ENCODE measurements at regions of chr3 and their contacts with region 1.

Region 1: GRCh38 chr3:194315088-194315964 is 35.8 kb downstream of the CPN2 start:
- DNase-seq: peak; percentile 92 to 95
- H3K4me3 ChIP-seq: peak overlapping the region; percentile 51
- H3K4me3 Mint-ChIP-seq: peak overlapping the region; percentile 85
- H3K27ac Mint-ChIP-seq: peak overlapping the region; percentile 93
- H3K4me1 ChIP-seq: peaks cover 41% of the 10 kb centered on the region
- H3K4me1 Mint-ChIP-seq: peaks cover 49% of the 10 kb centered on the region
- H3K27me3 ChIP-seq: no peaks in the 10 kb centered on the region
- H3K27me3 Mint-ChIP-seq: no peaks in the 10 kb centered on the region
- CTCF ChIP-seq: peak; percentile 87 to 95

Region 2: DNA sequence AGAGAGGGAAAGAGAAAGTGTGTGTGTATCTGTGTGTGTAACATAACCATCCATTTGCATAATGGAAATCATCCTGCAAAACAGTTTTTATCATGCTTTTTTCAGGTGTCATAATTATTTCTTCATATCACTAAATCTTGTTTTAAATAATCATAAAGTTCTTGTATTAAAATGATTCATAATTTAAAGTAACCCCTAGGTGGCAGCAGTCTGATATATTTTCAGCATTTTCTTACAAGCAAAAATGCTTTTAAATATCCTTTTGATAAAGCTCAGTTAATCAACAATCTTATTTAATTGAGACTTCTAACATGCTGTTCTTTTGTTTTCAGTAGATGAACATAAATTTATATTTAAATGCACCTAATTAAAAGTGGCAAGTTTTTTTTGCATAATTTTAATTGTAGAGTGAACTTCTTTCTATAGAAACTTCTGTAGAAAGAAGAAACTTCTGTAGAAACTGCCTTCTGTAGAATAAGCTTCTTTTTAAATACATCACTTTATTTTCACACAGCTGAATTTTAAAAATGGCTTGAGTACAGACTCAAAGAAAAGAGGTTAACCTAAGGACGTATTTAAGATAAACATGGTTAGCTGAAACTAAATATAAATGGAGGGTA is 649.8 kb before region 1 on chr3:
- CTCF ChIA-PET with region 1: interaction called, 11 read pairs
- POLR2A ChIA-PET with region 1: no interaction called
- intact Hi-C with region 1: loop called (anchors 1 kb)
- DNase-seq: peak in 1 of 2 experiments; percentile 6
- H3K4me3 ChIP-seq: no peak overlapping the region
- H3K4me3 Mint-ChIP-seq: no peak overlapping the region
- H3K27ac Mint-ChIP-seq: no peak overlapping the region
- H3K4me1 ChIP-seq: no peaks in the 10 kb centered on the region
- H3K4me1 Mint-ChIP-seq: no peaks in the 10 kb centered on the region
- H3K27me3 ChIP-seq: no peaks in the 10 kb centered on the region
- H3K27me3 Mint-ChIP-seq: no peaks in the 10 kb centered on the region
- CTCF ChIP-seq: peak in 1 of 2 experiments; percentile 53

Region 3: GRCh38 chr3:194166682-194167479 is 148.4 kb before region 1 on chr3:
- CTCF ChIA-PET with region 1: interaction called, 10 read pairs
- POLR2A ChIA-PET with region 1: no interaction called
- intact Hi-C with region 1: loop called (anchors 1 kb)
- DNase-seq: no peak
- H3K4me3 ChIP-seq: no peak overlapping the region
- H3K4me3 Mint-ChIP-seq: peak overlapping the region; percentile 44
- H3K27ac Mint-ChIP-seq: no peak overlapping the region
- H3K4me1 ChIP-seq: peaks cover 12% of the 10 kb centered on the region; the same call in 1 of the 2 replicates
- H3K4me1 Mint-ChIP-seq: peaks cover 15% of the 10 kb centered on the region
- H3K27me3 ChIP-seq: no peaks in the 10 kb centered on the region
- H3K27me3 Mint-ChIP-seq: no peaks in the 10 kb centered on the region
- CTCF ChIP-seq: no peak

Region 4: GRCh38 chr3:194333212-194333980 is 18.1 kb after region 1 on chr3:
- CTCF ChIA-PET with region 1: no interaction called
- POLR2A ChIA-PET with region 1: no interaction called
- intact Hi-C with region 1: no loop called
- DNase-seq: peak; percentile 90 to 95
- H3K4me3 ChIP-seq: peak overlapping the region; percentile 71
- H3K4me3 Mint-ChIP-seq: peak overlapping the region; percentile 88
- H3K27ac Mint-ChIP-seq: peak overlapping the region; percentile 92
- H3K4me1 ChIP-seq: peaks cover 26% of the 10 kb centered on the region
- H3K4me1 Mint-ChIP-seq: peaks cover 29% of the 10 kb centered on the region
- H3K27me3 ChIP-seq: no peaks in the 10 kb centered on the region
- H3K27me3 Mint-ChIP-seq: no peaks in the 10 kb centered on the region
- CTCF ChIP-seq: peak; percentile 95 to 97

Region 5: GRCh38 chr3:194346621-194347020 is 31.3 kb after region 1 on chr3:
- CTCF ChIA-PET with region 1: no interaction called
- POLR2A ChIA-PET with region 1: no interaction called
- intact Hi-C with region 1: no loop called
- DNase-seq: no peak
- H3K4me3 ChIP-seq: no peak overlapping the region
- H3K4me3 Mint-ChIP-seq: no peak overlapping the region
- H3K27ac Mint-ChIP-seq: no peak overlapping the region
- H3K4me1 ChIP-seq: peaks cover 4% of the 10 kb centered on the region; the same call in 1 of the 2 replicates
- H3K4me1 Mint-ChIP-seq: peaks cover 1% of the 10 kb centered on the region
- H3K27me3 ChIP-seq: no peaks in the 10 kb centered on the region
- H3K27me3 Mint-ChIP-seq: no peaks in the 10 kb centered on the region
- CTCF ChIP-seq: no peak

Measured in Caco-2 (cell line).